HepG2 (cell line): ENCODE measurements at regions of chr6 and their contacts with region 1.

Region 1: GRCh38 chr6:154430481-154430919 is 73.9 kb upstream of the IPCEF1 start:
- DNase-seq: peak; percentile 90
- ATAC-seq: peak; percentile 93
- H3K4me3 ChIP-seq: peak overlapping the region in 1 of 3 experiments; percentile 19; a peak in 1 of 6 replicates
- H3K27ac ChIP-seq: peak overlapping the region; percentile 75
- H3K4me1 ChIP-seq: peaks cover 51% of the 10 kb centered on the region
- H3K27me3 ChIP-seq: no peaks in the 10 kb centered on the region
- CTCF ChIP-seq: no peak
- EP300 ChIP-seq: peak in 1 of 2 experiments; percentile 68; a peak in 2 of 4 replicates
- POLR2A ChIP-seq: no peak
- RAD21 ChIP-seq: no peak

Region 2: GRCh38 chr6:154386848-154387717 is 43.4 kb before region 1 on chr6:
- CTCF ChIA-PET with region 1: no interaction called
- POLR2A ChIA-PET with region 1: no interaction called
- in situ Hi-C with region 1: no loop called
- intact Hi-C with region 1: loop called (anchors 2 kb)
- DNase-seq: peak; percentile 87
- ATAC-seq: peak; percentile 74
- H3K4me3 ChIP-seq: no peak overlapping the region
- H3K27ac ChIP-seq: no peak overlapping the region
- H3K4me1 ChIP-seq: peaks cover 21% of the 10 kb centered on the region
- H3K27me3 ChIP-seq: no peaks in the 10 kb centered on the region
- CTCF ChIP-seq: no peak
- EP300 ChIP-seq: peak in 1 of 2 experiments; percentile 39; a peak in 2 of 4 replicates
- POLR2A ChIP-seq: no peak
- RAD21 ChIP-seq: peak; percentile 23; the same call in 1 of the 2 replicates

Region 3: DNA sequence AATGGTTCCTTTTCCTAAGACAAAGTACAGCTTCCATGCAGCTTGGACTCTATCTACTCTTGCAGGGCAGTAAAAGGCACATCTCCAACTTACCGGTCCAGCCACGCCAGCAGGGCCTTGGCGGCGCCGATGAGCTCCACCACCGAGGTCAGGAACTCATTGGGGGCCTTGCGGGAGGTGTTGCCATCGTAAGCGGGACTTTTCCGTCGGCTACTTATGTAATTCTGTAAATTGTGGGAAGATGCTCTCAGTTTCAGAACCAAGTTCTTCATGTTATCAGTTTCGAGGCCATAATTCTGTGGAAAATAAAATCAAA is 11.5 kb after region 1 on chr6:
- CTCF ChIA-PET with region 1: no interaction called
- POLR2A ChIA-PET with region 1: interaction called, 14 read pairs
- in situ Hi-C with region 1: no loop called
- intact Hi-C with region 1: no loop called
- DNase-seq: no peak
- ATAC-seq: no peak
- H3K4me3 ChIP-seq: no peak overlapping the region
- H3K27ac ChIP-seq: no peak overlapping the region
- H3K4me1 ChIP-seq: peaks cover 40% of the 10 kb centered on the region
- H3K27me3 ChIP-seq: no peaks in the 10 kb centered on the region
- CTCF ChIP-seq: no peak
- EP300 ChIP-seq: no peak
- POLR2A ChIP-seq: no peak
- RAD21 ChIP-seq: no peak

Region 4: DNA sequence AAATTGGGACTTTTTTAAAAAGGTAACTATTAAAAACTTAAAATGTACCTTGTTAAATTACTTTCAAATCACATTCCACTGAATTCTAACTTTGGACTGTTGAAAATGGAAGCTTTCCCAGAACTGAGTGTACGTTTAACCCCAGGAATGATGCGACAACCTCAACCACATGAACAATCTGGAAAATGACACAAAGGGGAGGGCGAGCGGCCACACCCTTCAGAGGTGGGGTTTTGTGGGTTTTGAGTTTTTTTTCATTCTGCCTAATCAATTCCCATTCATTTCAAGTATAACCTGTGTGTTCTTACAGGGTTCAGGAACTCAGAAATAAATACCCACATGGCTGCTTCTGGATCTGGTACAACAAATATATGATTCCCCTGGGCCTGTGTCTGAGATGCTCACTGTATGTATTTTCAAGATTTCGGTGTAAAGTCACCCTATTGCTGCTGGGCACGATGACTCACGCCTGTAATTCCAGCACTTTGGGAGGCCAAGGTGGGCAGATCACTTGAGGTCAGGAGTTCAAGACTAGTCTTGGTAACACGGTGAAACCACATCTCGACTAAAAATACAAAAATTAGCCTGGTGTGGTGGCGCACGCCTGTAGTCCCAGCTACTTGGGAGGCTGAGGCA is 58.4 kb after region 1 on chr6:
- CTCF ChIA-PET with region 1: no interaction called
- POLR2A ChIA-PET with region 1: no interaction called
- in situ Hi-C with region 1: no loop called
- intact Hi-C with region 1: no loop called
- DNase-seq: no peak
- ATAC-seq: no peak
- H3K4me3 ChIP-seq: no peak overlapping the region
- H3K27ac ChIP-seq: no peak overlapping the region
- H3K4me1 ChIP-seq: peaks cover 59% of the 10 kb centered on the region
- H3K27me3 ChIP-seq: no peaks in the 10 kb centered on the region
- CTCF ChIP-seq: no peak
- EP300 ChIP-seq: no peak
- POLR2A ChIP-seq: no peak
- RAD21 ChIP-seq: no peak